ENCODE measurements at regions of chr3 and their contacts with region 1.

Region 1: GRCh38 chr3:120348981-120349818 is at the start of gene LRRC58:
- DNase-seq: peak; percentile 61 to 93 (median 86)

Region 2: GRCh38 chr3:120095226-120095978 is 253.8 kb before region 1 on chr3:
- intact Hi-C with region 1: loop called (anchors 2 kb)
- DNase-seq: peak; percentile 54 to 88 (median 75)

Region 3: DNA sequence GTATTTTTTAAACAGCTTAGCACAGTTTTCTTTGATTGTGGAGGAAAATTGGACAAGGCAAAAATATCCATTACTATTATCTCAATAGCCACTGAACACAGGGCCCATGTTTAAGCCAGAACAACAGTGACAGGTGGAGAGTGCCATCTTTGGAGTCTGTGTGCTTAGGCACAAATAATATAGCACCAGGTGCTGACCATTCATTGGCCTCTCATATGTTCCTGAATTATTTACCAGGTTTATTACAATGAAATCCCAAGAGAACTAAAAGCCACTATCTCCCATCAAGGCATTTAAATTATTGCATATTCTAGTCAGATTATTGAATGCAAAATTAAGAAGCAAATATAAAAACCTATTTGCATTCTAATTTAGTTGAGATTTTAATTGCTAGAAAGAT is 103.8 kb before region 1 on chr3:
- intact Hi-C with region 1: loop called (anchors 10 kb)
- DNase-seq: no peak

Measured in head of caudate nucleus (tissue), 42 donors.